ENCODE measurements at regions of chr17 and their contacts with region 1.

Region 1: GRCh38 chr17:27360507-27360906 is 66.6 kb downstream of the WSB1 start:
- DNase-seq: no peak
- ATAC-seq: no peak
- H3K4me3 ChIP-seq: no peak overlapping the region
- H3K27ac ChIP-seq: no peak overlapping the region
- H3K4me1 ChIP-seq: no peaks in the 10 kb centered on the region
- H3K27me3 ChIP-seq: no peaks in the 10 kb centered on the region
- CTCF ChIP-seq: no peak
- POLR2A ChIP-seq: no peak

Region 2: GRCh38 chr17:27593232-27593856 is 232.8 kb after region 1 on chr17:
- intact Hi-C with region 1: loop called (anchors 5 kb)
- DNase-seq: no peak
- ATAC-seq: no peak
- H3K4me3 ChIP-seq: no peak overlapping the region
- H3K27ac ChIP-seq: no peak overlapping the region
- H3K4me1 ChIP-seq: no peaks in the 10 kb centered on the region
- H3K27me3 ChIP-seq: no peaks in the 10 kb centered on the region
- CTCF ChIP-seq: no peak
- POLR2A ChIP-seq: no peak

Measured in body of pancreas (tissue), 4 donors.